ENCODE measurements at regions of chr6 and their contacts with region 1.

Region 1: GRCh38 chr6:136463743-136464142 is 86.5 kb downstream of the MAP7 start:
- DNase-seq: no peak
- H3K4me3 ChIP-seq: no peak overlapping the region
- H3K27ac ChIP-seq: peak overlapping the region; percentile 61 to 100 (median 96)
- H3K27me3 ChIP-seq: no peaks in the 10 kb centered on the region
- CTCF ChIP-seq: no peak

Region 2: DNA sequence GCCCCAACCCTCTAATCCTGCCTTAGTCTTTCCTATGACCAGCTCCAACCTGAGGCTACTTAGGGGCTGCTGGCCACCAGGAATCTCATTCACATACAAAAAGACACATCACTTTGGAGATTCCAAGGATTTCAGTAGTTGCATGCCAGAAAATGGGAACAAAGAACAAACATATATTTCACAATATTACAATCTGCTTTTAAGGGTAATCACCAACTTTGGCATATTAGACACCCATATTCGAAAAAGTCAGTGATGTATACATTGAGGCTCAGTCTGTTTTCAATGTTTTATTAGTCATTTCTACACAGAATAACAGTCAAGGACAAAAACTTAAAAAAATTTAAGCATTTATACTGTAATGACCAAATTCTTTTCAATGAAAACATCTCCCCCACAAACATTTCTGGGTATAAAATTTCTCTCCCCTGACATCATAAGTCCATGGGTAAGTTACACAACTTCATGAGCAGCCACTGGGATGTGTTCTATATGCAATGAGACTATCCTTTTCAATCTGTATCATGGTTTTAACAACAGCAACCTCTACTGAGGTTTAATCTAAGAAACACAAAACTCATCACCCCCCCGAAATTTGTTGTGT is 17.1 kb before region 1 on chr6:
- intact Hi-C with region 1: loop called in 1 of 2 experiments (anchors 2 kb)
- DNase-seq: no peak
- H3K4me3 ChIP-seq: no peak overlapping the region
- H3K27ac ChIP-seq: peak overlapping the region in 52 of 59 donors; percentile 3 to 98 (median 66)
- H3K27me3 ChIP-seq: no peaks in the 10 kb centered on the region
- CTCF ChIP-seq: no peak

Region 3: DNA sequence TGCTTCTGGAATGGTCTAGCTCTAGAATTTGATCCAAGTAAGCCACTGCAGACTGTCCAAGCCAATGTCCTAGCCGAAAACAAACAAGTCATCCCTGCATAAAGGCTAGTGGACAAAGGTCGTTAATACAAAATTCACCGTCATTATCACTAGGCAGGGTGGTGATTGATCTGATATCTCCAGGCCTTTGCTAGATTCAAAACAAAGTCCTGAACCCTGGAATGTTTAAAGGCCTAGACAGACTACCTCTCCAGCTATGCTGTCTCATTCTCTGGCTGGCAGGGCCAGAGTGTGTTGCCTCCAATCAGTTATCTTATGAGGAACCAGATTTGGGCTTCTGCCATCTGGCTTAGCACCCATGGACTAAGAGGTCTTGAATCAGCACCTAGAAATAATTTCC is 48.2 kb after region 1 on chr6:
- intact Hi-C with region 1: no loop called
- DNase-seq: peak in 1 of 10 donors; percentile 41
- H3K4me3 ChIP-seq: no peak overlapping the region
- H3K27ac ChIP-seq: peak overlapping the region in 47 of 59 donors; percentile 6 to 99 (median 55)
- H3K27me3 ChIP-seq: no peaks in the 10 kb centered on the region
- CTCF ChIP-seq: no peak